Activated B cell treated with CpG ODN at 0.5 μM for 24 hours (primary cell): ENCODE measurements at regions of chr22 and their contacts with region 1.

Region 1: DNA sequence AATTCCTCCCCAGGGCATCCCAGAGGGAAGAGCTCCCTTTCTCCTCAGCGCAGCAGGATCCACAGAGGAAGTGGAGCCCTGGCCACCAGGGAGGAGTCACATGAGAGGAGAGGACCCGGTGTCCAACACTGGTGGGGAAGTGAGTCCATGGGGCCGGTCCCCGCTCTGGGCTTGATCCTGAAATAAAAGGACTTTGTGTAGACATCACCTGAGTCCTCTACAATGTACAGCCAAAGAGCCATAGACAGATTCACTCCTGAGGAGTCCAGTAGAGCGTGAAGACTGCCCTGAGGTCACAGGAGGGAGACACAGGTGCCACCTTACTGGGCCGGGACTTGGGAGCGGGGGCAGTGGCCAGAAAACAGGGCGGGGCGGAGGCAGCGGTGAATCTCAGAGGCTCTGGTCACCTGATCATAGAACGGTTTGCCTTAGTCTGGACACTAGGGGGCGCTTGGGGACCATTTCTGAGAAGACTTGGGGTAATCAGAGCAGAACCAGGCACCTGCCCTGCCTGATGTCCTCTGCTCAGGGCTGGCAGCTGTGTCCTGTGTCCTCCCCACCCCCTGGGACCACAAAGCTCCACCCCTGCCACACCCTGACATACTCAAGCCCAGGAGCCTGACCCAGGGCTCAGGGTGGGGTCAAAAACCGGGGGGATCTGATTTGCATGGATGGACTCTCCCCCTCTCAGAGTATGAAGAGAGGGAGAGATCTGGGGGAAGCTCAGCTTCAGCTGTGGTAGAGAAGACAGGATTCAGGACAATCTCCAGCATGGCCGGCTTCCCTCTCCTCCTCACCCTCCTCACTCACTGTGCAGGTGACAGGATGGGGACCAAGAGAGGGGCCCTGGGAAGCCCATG is 112.7 kb downstream of the VPREB1 start:
- DNase-seq: peak; percentile 74
- ATAC-seq: peak; percentile 87
- H3K4me3 Mint-ChIP-seq: peak overlapping the region; percentile 65
- H3K27ac Mint-ChIP-seq: peak overlapping the region; percentile 79
- H3K4me1 Mint-ChIP-seq: peaks cover 55% of the 10 kb centered on the region
- H3K27me3 Mint-ChIP-seq: no peaks in the 10 kb centered on the region
- CTCF ChIP-seq: no peak

Region 2: DNA sequence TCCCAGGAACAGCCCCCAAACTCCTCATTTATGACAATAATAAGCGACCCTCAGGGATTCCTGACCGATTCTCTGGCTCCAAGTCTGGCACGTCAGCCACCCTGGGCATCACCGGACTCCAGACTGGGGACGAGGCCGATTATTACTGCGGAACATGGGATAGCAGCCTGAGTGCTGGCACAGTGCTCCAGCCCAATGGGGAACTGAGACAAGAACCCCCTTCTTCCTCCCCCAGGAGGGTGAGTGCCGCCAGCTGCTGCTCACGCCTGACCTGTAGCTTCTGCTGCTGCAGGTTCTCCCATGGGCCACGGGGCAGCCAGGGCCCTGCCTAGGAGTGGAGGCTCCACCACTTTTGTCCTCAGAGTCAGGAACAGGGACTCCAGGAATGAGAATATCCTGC is 34.5 kb before region 1 on chr22:
- CTCF ChIA-PET with region 1: no interaction called
- POLR2A ChIA-PET with region 1: no interaction called
- intact Hi-C with region 1: loop called (anchors 5 kb)
- DNase-seq: no peak
- ATAC-seq: peak; percentile 11
- H3K4me3 Mint-ChIP-seq: peak overlapping the region; percentile 15
- H3K27ac Mint-ChIP-seq: no peak overlapping the region
- H3K4me1 Mint-ChIP-seq: peaks cover 43% of the 10 kb centered on the region
- H3K27me3 Mint-ChIP-seq: no peaks in the 10 kb centered on the region
- CTCF ChIP-seq: no peak

Region 3: DNA sequence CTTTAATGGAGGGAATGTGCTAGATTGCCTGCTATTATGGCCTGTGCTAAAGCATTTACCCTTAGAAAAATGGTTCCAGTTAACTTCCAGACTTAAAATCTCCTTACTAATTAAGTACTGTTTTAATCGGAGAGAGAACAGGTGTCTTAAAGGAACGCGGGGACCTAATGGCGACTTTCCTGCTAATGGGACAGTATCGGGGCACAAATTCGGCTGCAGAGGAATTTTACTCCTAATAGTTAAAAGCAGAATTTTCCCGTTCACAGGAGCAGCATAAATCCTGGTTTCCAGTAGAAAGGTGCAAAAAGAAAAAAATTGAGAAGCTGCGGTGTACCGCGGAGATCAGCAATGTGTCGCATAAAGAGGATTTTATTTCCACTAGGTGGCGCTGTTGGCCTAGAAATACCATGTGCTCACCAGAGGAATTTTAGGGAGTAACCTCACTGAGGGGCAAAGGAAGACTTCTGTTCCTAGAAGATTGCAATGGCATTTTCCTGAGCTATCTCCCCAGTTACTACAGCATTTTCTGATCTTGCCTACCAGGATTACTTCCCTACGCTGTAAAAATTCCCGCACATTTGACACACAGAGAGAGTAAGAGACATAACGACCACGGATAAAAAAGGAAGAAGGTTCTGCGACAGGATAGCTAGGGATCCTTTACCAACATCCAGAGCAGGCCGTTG is 106.7 kb after region 1 on chr22:
- CTCF ChIA-PET with region 1: interaction called, 3 read pairs
- POLR2A ChIA-PET with region 1: no interaction called
- intact Hi-C with region 1: loop called (anchors 2 kb)
- DNase-seq: no peak
- ATAC-seq: peak; percentile 61
- H3K4me3 Mint-ChIP-seq: peak overlapping the region; percentile 24
- H3K27ac Mint-ChIP-seq: peak overlapping the region; percentile 61
- H3K4me1 Mint-ChIP-seq: peaks cover 19% of the 10 kb centered on the region
- H3K27me3 Mint-ChIP-seq: peaks cover 4% of the 10 kb centered on the region
- CTCF ChIP-seq: peak; percentile 76

Region 4: GRCh38 chr22:22487869-22488597 is 130.8 kb after region 1 on chr22:
- CTCF ChIA-PET with region 1: no interaction called
- POLR2A ChIA-PET with region 1: no interaction called
- intact Hi-C with region 1: no loop called
- DNase-seq: no peak
- ATAC-seq: no peak
- H3K4me3 Mint-ChIP-seq: no peak overlapping the region
- H3K27ac Mint-ChIP-seq: no peak overlapping the region
- H3K4me1 Mint-ChIP-seq: peaks cover 2% of the 10 kb centered on the region
- H3K27me3 Mint-ChIP-seq: no peaks in the 10 kb centered on the region
- CTCF ChIP-seq: no peak

Region 5: GRCh38 chr22:22587577-22588188 is 230.4 kb after region 1 on chr22:
- CTCF ChIA-PET with region 1: interaction called, 7 read pairs
- POLR2A ChIA-PET with region 1: no interaction called
- intact Hi-C with region 1: loop called (anchors 1 kb)
- DNase-seq: no peak
- ATAC-seq: no peak
- H3K4me3 Mint-ChIP-seq: no peak overlapping the region
- H3K27ac Mint-ChIP-seq: no peak overlapping the region
- H3K4me1 Mint-ChIP-seq: peaks cover 42% of the 10 kb centered on the region
- H3K27me3 Mint-ChIP-seq: no peaks in the 10 kb centered on the region
- CTCF ChIP-seq: no peak